ENCODE measurements at regions of chr7 and their contacts with region 1.

Region 1: GRCh38 chr7:139075031-139075652 is 34.4 kb downstream of the ZC3HAV1 start:
- DNase-seq: peak; percentile 30 to 91 (median 65)
- ATAC-seq: peak; percentile 82 to 86 (median 84)
- H3K4me3 ChIP-seq: no peak overlapping the region
- H3K4me3 Mint-ChIP-seq: peak overlapping the region; percentile 30 to 60 (median 41)
- H3K27ac ChIP-seq: peak overlapping the region; percentile 67
- H3K27ac Mint-ChIP-seq: peak overlapping the region; percentile 82 to 88
- H3K4me1 ChIP-seq: peaks cover 36 to 54% of the 10 kb centered on the region in 2 experiments
- H3K4me1 Mint-ChIP-seq: peaks cover 67 to 74% (median 73%) of the 10 kb centered on the region in 3 donors
- H3K27me3 ChIP-seq: no peaks in the 10 kb centered on the region
- H3K27me3 Mint-ChIP-seq: no peaks in the 10 kb centered on the region

Region 2: DNA sequence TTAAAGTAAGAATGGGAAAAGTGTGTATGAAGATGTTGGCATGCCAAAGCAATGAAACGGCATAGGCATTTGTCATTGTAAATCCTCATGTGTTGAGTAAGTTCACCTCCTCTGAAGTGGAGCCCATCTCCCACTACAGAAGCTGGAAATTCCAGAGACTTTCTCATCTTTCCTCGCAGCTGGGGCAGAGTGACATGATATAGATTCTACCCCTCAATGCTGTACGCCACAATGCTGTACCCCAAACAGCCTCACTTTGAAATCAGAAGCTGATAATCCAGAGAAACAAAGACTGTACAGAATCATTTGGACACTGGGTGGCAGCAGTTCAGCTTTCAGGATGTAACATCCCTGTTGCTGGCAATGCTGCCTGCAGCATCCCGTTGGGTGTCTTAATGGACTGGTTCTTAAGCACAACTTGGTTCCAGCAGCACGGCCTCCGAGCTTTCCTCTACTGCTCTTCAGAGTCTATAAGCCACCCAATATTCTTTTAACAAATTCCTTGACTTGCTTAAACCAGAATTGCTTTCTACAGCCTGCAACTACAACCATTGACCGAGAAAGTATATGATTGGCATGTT is 58.1 kb before region 1 on chr7:
- CTCF ChIA-PET with region 1: interaction called, 10 to 36 read pairs
- POLR2A ChIA-PET with region 1: no interaction called
- DNase-seq: peak; percentile 15 to 80 (median 55)
- ATAC-seq: peak; percentile 81 to 98 (median 88)
- H3K4me3 ChIP-seq: no peak overlapping the region
- H3K4me3 Mint-ChIP-seq: no peak overlapping the region
- H3K27ac ChIP-seq: no peak overlapping the region
- H3K27ac Mint-ChIP-seq: no peak overlapping the region
- H3K4me1 ChIP-seq: no peaks in the 10 kb centered on the region
- H3K4me1 Mint-ChIP-seq: peaks cover 6 to 17% (median 9%) of the 10 kb centered on the region in 3 donors
- H3K27me3 ChIP-seq: peaks cover 0 to 6% of the 10 kb centered on the region in 2 experiments
- H3K27me3 Mint-ChIP-seq: peaks cover 0 to 9% of the 10 kb centered on the region in 2 donors

Region 3: GRCh38 chr7:139058943-139059342 is 16.2 kb before region 1 on chr7:
- CTCF ChIA-PET with region 1: interaction called, 4 to 23 read pairs
- POLR2A ChIA-PET with region 1: interaction called in 1 of 2 experiments, 6 read pairs
- DNase-seq: no peak
- ATAC-seq: no peak
- H3K4me3 ChIP-seq: no peak overlapping the region
- H3K4me3 Mint-ChIP-seq: no peak overlapping the region
- H3K27ac ChIP-seq: no peak overlapping the region
- H3K27ac Mint-ChIP-seq: peak overlapping the region in 1 of 2 donors; percentile 64
- H3K4me1 ChIP-seq: peaks cover 3 to 9% of the 10 kb centered on the region in 2 experiments
- H3K4me1 Mint-ChIP-seq: peaks cover 40 to 58% (median 47%) of the 10 kb centered on the region in 3 donors
- H3K27me3 ChIP-seq: no peaks in the 10 kb centered on the region
- H3K27me3 Mint-ChIP-seq: no peaks in the 10 kb centered on the region

Region 4: DNA sequence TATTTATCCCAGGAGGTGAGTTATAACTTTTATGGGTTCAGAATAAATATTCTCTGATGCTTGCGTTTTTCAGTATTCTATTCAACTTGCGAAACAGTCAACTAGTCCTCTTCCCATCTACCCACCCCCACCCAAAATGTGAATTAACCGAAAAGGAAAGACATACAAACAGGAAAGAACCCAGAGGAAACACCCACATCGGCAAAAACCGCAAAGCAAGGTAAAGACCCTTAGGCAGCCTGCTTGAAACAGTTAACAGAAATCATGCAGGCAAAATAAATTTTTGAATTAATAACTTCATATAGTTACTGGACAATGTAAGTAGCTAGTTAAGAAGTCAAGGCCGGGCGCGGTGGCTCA is 28.9 kb after region 1 on chr7:
- CTCF ChIA-PET with region 1: interaction called in 1 of 2 experiments, 20 read pairs
- POLR2A ChIA-PET with region 1: interaction called in 1 of 2 experiments, 3 read pairs
- DNase-seq: peak in 3 of 35 experiments; percentile 31 to 62 (median 39)
- ATAC-seq: peak in 3 of 4 experiments; percentile 12 to 33 (median 31)
- H3K4me3 ChIP-seq: peak overlapping the region; percentile 88 to 100
- H3K4me3 Mint-ChIP-seq: peak overlapping the region; percentile 89 to 99 (median 98)
- H3K27ac ChIP-seq: peak overlapping the region; percentile 65
- H3K27ac Mint-ChIP-seq: peak overlapping the region; percentile 91 to 93
- H3K4me1 ChIP-seq: peaks cover 21 to 35% of the 10 kb centered on the region in 2 experiments
- H3K4me1 Mint-ChIP-seq: peaks cover 22 to 62% (median 46%) of the 10 kb centered on the region in 3 donors
- H3K27me3 ChIP-seq: no peaks in the 10 kb centered on the region
- H3K27me3 Mint-ChIP-seq: no peaks in the 10 kb centered on the region

Region 5: DNA sequence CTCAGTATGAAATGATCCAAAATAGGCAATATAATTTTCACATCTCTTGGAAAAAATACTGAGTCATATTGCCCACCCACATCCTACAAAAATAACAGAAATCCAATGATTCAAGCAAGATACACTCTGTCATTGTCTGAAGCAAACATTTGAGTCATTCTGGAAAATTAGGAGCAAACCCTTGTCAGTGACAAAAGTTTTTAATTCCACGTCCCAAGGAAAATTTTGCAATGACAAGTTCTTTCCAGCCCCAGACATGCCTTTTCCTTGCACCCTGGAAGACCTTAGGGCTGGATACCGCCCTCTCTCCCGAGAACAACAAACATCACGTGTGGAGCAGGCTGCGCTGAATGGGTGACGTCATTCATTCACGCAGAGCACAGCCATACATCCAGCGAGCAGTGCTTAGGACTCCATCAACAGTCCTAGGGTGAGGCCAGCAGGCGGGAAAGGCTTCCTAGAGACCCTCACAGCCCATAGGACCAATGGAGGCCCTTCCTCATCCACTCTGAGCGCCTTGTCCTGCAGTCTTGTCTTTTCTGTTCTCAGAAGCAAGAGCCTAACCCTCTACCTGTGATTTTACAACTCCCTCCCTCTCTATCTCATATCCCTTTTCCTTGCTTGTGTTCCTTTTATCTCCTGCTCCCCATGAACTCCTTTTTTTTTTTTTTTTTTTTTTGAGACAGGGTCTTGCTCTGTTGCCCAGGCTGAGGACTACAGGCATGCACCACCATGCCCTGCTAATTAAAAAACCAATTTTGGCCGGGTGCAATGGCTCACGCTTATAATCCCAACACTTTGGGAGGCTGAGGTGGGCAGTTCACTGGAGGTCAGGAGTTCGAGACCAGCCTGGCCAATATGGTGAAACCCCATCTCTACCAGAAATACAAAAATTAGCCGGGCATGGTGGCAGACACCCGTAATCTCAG is 1125.2 kb after region 1 on chr7:
- CTCF ChIA-PET with region 1: no interaction called
- POLR2A ChIA-PET with region 1: no interaction called
- DNase-seq: no peak
- ATAC-seq: no peak
- H3K4me3 ChIP-seq: no peak overlapping the region
- H3K4me3 Mint-ChIP-seq: no peak overlapping the region
- H3K27ac ChIP-seq: no peak overlapping the region
- H3K27ac Mint-ChIP-seq: no peak overlapping the region
- H3K4me1 ChIP-seq: no peaks in the 10 kb centered on the region
- H3K4me1 Mint-ChIP-seq: peaks cover 0 to 12% (median 0%) of the 10 kb centered on the region in 3 donors
- H3K27me3 ChIP-seq: no peaks in the 10 kb centered on the region
- H3K27me3 Mint-ChIP-seq: no peaks in the 10 kb centered on the region

Measured in T-cell (primary cell).